ENCODE measurements at regions of chrX and their contacts with region 1.

Region 1: GRCh38 chrX:17689971-17690409 is 47.3 kb upstream of the SCML1 start:
- DNase-seq: peak; percentile 77
- ATAC-seq: peak; percentile 94
- H3K4me3 ChIP-seq: no peak overlapping the region
- H3K27ac ChIP-seq: no peak overlapping the region
- H3K4me1 ChIP-seq: peaks cover 19% of the 10 kb centered on the region
- H3K27me3 ChIP-seq: no peaks in the 10 kb centered on the region
- CTCF ChIP-seq: peak; percentile 81

Region 2: DNA sequence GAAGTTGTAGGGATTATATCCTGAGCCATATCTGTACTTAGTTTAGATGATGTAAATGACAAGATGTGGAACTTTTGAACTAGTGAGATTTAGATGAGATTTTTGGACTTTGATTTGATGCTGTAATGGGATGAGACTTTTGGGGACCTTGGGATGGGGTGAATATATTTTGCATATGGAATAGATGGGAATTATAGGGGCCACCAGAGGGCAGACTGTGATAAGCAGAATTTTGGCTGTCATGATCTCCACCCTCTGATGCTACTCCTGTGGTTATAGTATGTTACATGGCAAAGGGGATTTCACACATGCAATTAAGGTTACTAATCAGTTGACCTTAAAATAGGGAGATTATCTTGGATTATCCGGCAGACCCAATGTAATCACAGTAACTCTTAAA is 529.0 kb before region 1 on chrX:
- CTCF ChIA-PET with region 1: no interaction called
- POLR2A ChIA-PET with region 1: no interaction called
- intact Hi-C with region 1: loop called (anchors 1 kb)
- DNase-seq: peak; percentile 38
- ATAC-seq: no peak
- H3K4me3 ChIP-seq: no peak overlapping the region
- H3K27ac ChIP-seq: no peak overlapping the region
- H3K4me1 ChIP-seq: no peaks in the 10 kb centered on the region
- H3K27me3 ChIP-seq: no peaks in the 10 kb centered on the region
- CTCF ChIP-seq: peak; percentile 65

Region 3: GRCh38 chrX:17374619-17375366 is 315.2 kb before region 1 on chrX and contains the start of gene NHS:
- CTCF ChIA-PET with region 1: no interaction called
- POLR2A ChIA-PET with region 1: no interaction called
- intact Hi-C with region 1: loop called (anchors 2 kb)
- DNase-seq: peak; percentile 83
- ATAC-seq: peak; percentile 57
- H3K4me3 ChIP-seq: peak within 1 kb of the TSS; percentile 91
- H3K27ac ChIP-seq: peak within 1 kb of the TSS; percentile 26; the same call in 1 of the 2 replicates
- H3K4me1 ChIP-seq: peaks cover 14% of the 10 kb centered on the region
- H3K27me3 ChIP-seq: no peaks in the 10 kb centered on the region
- CTCF ChIP-seq: peak; percentile 57
- total RNA-seq, gene NHS: 4.9 and 5.6 TPM in 2 replicates

Region 4: DNA sequence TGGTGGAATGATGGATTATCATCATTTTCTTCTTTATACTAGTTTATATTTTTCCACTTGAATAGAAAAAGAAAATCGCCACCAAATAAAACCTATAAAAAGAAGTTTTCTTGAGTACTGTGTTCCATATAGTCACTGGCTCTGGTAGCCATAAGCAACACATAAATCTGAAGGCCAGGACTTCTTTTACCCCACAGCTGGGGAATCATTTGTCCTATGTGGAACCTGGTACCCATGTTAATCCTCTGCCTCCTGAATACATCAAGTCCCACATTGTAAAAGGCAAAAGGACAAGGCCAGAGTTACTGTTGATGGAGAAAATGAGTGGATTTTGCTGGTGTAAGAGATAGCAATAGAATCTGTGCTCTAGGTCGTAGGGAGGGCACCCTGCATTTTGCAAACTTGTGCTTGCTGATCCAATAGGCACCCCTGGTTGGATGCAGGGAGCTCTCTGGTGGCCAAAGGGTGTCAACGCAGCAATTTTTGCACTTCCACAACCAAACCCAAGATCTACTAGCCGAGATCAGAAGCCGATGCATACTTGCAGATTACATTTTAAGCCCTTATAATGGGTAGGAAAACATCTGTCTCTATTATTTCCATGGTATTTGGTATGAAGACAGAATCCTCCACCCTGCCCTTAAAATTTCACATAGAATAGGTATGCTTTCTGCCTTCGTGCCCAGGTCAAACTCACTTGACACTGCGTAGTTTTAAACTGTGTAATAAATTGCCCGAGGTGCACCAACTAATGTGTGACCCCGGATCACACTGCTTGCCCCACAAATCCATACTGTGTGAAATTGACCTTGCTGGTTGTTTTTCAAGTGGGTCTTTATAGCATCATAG is 98.9 kb before region 1 on chrX:
- CTCF ChIA-PET with region 1: no interaction called
- POLR2A ChIA-PET with region 1: no interaction called
- intact Hi-C with region 1: loop called (anchors 1 kb)
- DNase-seq: peak; percentile 79
- ATAC-seq: peak; percentile 58
- H3K4me3 ChIP-seq: peak overlapping the region; percentile 51
- H3K27ac ChIP-seq: peak overlapping the region; percentile 55
- H3K4me1 ChIP-seq: peaks cover 43% of the 10 kb centered on the region
- H3K27me3 ChIP-seq: no peaks in the 10 kb centered on the region
- CTCF ChIP-seq: peak; percentile 87

Region 5: DNA sequence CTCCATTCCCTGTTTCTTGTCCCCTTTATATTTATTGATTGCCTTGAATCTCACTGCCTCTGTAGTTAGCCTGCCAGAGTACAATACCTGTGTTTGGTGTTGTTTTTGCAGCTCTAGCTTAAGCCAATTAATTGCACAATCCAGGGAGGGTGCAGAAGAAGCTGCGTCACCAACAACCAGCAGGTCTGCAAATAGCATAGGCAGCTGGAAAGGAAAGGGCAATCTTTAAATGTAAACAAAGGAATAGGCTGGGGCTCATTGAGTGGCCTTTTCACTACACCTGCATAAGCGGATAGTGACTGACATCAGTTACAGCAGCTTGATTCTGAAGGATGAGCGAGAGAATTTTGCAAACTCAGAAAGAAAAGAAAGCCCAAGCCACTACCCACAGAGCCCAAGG is 277.9 kb after region 1 on chrX:
- CTCF ChIA-PET with region 1: no interaction called
- POLR2A ChIA-PET with region 1: no interaction called
- intact Hi-C with region 1: no loop called
- DNase-seq: no peak
- ATAC-seq: no peak
- H3K4me3 ChIP-seq: no peak overlapping the region
- H3K27ac ChIP-seq: no peak overlapping the region
- H3K4me1 ChIP-seq: no peaks in the 10 kb centered on the region
- H3K27me3 ChIP-seq: peaks cover 47% of the 10 kb centered on the region
- CTCF ChIP-seq: no peak

Measured in PC-3 (cell line).